Astrocyte of the cerebellum (primary cell): ENCODE measurements at regions of chr2 and their contacts with region 1.

Region 1: DNA sequence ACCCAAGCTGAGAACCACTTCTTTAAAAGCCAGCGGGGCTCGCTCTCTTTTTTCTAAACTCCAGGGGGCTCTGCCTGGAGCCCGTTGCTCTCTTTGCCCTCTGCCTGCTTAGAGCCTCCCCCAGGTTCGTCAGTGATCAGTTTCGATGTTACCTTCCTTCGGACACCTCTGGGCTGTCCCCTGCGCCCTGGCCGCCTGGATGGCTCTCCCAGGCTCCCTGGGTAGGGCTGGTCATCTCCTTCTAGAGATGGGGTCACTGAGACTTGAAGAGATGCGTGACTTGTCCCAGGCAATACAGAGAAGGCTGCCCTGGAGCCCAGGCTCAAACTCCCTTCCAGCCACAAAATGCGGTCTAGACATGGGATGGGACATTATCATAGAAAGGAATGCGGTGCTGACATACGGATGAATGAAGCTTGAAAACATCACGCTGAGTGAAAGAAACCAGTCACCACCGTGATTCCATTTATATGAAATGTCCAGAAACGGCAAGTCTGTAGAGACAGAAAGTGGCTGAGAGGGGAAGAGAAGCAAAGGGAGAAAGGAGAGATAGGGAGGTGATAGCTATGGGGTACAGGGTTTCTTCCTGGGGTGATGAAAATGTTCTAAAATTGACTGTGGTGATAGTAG is 14.6 kb downstream of the KCNF1 start:
- DNase-seq: no peak
- H3K4me3 ChIP-seq: no peak overlapping the region
- CTCF ChIP-seq: no peak

Region 2: DNA sequence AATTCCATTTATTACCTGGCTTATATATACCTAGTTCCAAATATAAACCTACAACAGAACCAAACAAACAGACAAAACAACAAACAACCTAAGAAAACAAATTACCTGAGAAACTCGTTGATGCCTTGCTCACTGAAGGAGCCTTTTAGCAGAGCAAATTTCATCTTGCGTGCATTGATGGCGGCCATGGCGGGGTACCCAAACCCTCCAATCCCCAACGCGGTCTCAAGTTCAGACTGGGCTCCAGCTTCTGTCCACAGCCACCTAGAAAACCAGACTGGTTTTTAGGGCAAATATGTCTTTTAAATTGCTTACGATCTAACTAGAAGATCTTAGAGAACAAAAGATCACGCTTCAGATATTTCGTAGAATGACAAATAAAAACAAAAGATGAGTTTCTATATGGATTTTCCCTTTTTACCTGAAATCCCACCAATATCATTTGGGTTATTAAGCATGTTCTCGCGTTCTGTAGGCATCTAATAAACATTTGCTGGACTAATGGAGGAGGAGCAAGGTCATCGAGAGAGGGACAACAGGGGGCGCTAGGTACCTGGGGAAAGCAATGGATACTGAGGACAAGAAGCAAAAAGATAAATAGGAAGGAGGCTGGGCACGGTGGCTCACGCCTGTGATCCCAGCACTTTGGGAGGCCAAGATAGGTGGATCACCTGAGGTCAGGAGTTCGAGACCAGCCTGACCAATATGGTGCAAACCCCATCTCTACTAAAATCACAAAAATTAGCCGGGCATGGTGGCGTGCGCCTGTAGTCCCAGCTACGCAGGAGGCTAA is 138.9 kb before region 1 on chr2:
- in situ Hi-C with region 1: no loop called
- DNase-seq: no peak
- H3K4me3 ChIP-seq: no peak overlapping the region
- CTCF ChIP-seq: peak; percentile 30

Region 3: GRCh38 chr2:10864861-10865636 is 61.3 kb before region 1 on chr2:
- in situ Hi-C with region 1: loop called (anchors 5 kb)
- DNase-seq: no peak
- H3K4me3 ChIP-seq: no peak overlapping the region
- CTCF ChIP-seq: peak; percentile 20